IMR-90 (cell line): ENCODE measurements at regions of chr19 and their contacts with region 1.

Region 1: GRCh38 chr19:9140159-9140874 is at the start of gene ZNF317:
- DNase-seq: peak; percentile 88
- ATAC-seq: peak; percentile 97
- H3K4me3 ChIP-seq: peak within 1 kb of the TSS; percentile 88
- H3K27ac ChIP-seq: peak within 1 kb of the TSS; percentile 93
- H3K4me1 ChIP-seq: no peaks in the 10 kb centered on the region
- H3K27me3 ChIP-seq: no peaks in the 10 kb centered on the region
- CTCF ChIP-seq: no peak
- POLR2A ChIP-seq: peak; percentile 81
- RAD21 ChIP-seq: no peak
- total RNA-seq, gene ZNF317: 16.4 and 17.6 TPM in 2 replicates

Region 2: DNA sequence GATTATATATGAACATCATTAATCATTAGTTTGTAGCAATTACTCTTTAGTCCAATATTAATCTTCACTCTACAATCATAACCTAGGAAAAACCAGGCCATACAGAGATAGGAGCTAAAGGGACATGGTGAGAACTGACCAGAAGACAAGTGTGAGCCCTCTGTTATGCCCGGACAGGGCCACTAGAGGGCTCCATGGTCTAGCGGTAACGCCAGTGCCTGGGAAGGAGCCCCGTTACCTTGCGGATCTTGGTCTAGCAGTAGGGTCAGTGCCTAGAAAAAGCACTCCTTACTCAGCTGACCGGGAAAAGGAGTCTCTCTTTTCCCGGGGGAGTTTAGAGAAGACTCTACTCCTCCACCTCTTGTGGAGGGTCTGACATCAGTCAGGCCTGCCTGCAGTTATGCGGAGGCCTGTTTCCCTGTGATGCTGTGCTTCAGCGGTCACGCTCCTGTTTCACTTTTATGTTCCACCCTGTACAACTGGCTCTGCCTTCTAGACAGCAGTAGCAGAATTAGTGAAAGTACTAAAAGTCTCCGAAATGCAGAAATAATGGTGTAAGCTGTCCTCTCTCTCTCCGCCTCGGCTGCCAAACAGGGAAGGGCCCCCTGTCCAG is 65.3 kb after region 1 on chr19:
- CTCF ChIA-PET with region 1: no interaction called
- POLR2A ChIA-PET with region 1: no interaction called
- dilution Hi-C with region 1: no loop called
- in situ Hi-C with region 1: no loop called
- intact Hi-C with region 1: loop called (anchors 2 kb)
- DNase-seq: peak; percentile 54
- ATAC-seq: peak; percentile 97
- H3K4me3 ChIP-seq: peak overlapping the region; percentile 17
- H3K27ac ChIP-seq: no peak overlapping the region
- H3K4me1 ChIP-seq: no peaks in the 10 kb centered on the region
- H3K27me3 ChIP-seq: no peaks in the 10 kb centered on the region
- CTCF ChIP-seq: peak; percentile 72
- POLR2A ChIP-seq: no peak
- RAD21 ChIP-seq: peak; percentile 79

Region 3: GRCh38 chr19:9309139-9309973 is 169.0 kb after region 1 on chr19 and contains the start of gene ZNF699:
- CTCF ChIA-PET with region 1: no interaction called
- POLR2A ChIA-PET with region 1: no interaction called
- dilution Hi-C with region 1: no loop called
- in situ Hi-C with region 1: no loop called
- intact Hi-C with region 1: loop called (anchors 5 kb)
- DNase-seq: peak; percentile 96
- ATAC-seq: peak; percentile 92
- H3K4me3 ChIP-seq: peak within 1 kb of the TSS; percentile 94
- H3K27ac ChIP-seq: peak within 1 kb of the TSS; percentile 86
- H3K4me1 ChIP-seq: 0 out of 2 replicates have a peak, but pooled peaks cover 2% of the 10 kb centered on the region
- H3K27me3 ChIP-seq: no peaks in the 10 kb centered on the region
- CTCF ChIP-seq: no peak
- POLR2A ChIP-seq: peak; percentile 81
- RAD21 ChIP-seq: no peak
- total RNA-seq, gene ZNF699: 7.2 and 7.3 TPM in 2 replicates

Region 4: GRCh38 chr19:9914315-9915207 is 774.2 kb after region 1 on chr19:
- CTCF ChIA-PET with region 1: no interaction called
- POLR2A ChIA-PET with region 1: no interaction called
- dilution Hi-C with region 1: no loop called
- in situ Hi-C with region 1: no loop called
- intact Hi-C with region 1: loop called (anchors 5 kb)
- DNase-seq: peak; percentile 77
- ATAC-seq: peak; percentile 84
- H3K4me3 ChIP-seq: peak overlapping the region; percentile 52
- H3K27ac ChIP-seq: no peak overlapping the region
- H3K4me1 ChIP-seq: peaks cover 2% of the 10 kb centered on the region; the same call in 1 of the 2 replicates
- H3K27me3 ChIP-seq: peaks cover 16% of the 10 kb centered on the region
- CTCF ChIP-seq: peak; percentile 66
- POLR2A ChIP-seq: no peak
- RAD21 ChIP-seq: peak; percentile 53

Region 5: GRCh38 chr19:10074153-10074552 is 933.8 kb after region 1 on chr19:
- CTCF ChIA-PET with region 1: no interaction called
- POLR2A ChIA-PET with region 1: no interaction called
- dilution Hi-C with region 1: no loop called
- in situ Hi-C with region 1: loop called (anchors 25 kb)
- intact Hi-C with region 1: no loop called
- DNase-seq: peak; percentile 36
- ATAC-seq: peak; percentile 44; the same call in 1 of the 2 replicates
- H3K4me3 ChIP-seq: no peak overlapping the region
- H3K27ac ChIP-seq: no peak overlapping the region
- H3K4me1 ChIP-seq: no peaks in the 10 kb centered on the region
- H3K27me3 ChIP-seq: peaks cover 10% of the 10 kb centered on the region
- CTCF ChIP-seq: peak; percentile 42
- POLR2A ChIP-seq: no peak
- RAD21 ChIP-seq: peak; percentile 54